Activated naive CD8-positive, alpha-beta T cell treated with anti-CD3 and anti-CD28 coated beads, Interleukin-2, amount 10 ng/mL, durations not matched to agents 7 days and 5 days (primary cell): ENCODE measurements at regions of chr22 and their contacts with region 1.

Region 1: DNA sequence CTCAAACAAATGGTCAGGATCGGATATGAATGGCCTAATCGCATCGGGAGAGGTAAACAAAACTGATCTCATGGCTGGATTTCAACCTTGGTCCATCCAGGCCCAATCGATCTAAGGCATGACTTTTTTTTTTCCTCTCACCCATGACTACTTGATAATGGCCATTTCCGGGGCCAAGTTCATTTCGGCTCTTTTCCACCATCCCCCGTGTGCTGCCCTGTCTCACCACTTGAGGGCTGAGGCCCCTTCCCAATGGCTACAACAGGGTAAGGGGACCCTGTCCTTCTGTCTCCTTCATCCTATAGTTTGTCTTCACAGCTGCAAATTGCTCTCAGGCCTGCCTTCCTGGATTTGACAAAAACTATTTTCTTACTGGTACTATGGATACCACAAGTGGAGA is 26.7 kb downstream of the GRAP2 start:
- DNase-seq: no peak
- ATAC-seq: peak; percentile 24
- H3K4me3 Mint-ChIP-seq: no peak overlapping the region
- H3K27ac Mint-ChIP-seq: no peak overlapping the region
- H3K4me1 Mint-ChIP-seq: peaks cover 34% of the 10 kb centered on the region
- H3K27me3 Mint-ChIP-seq: no peaks in the 10 kb centered on the region

Region 2: DNA sequence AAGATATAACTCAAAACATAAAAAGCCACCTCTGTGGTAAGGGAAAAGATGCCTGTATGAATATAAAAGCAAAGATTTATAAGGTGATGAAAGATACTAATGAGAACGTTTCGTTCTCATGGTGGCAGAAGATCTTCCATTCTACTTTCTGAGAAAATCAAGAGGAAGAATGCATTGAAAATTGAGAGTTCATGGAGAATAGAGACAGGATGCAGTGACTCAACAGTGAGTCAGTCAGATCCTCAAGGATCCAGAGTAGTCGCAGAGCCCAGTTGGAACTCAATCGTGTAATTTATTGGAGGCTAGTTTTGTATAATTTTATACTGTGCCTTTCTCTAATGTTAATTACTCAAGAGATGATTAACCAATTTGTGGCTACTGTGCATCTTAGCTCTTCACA is 107.3 kb before region 1 on chr22:
- POLR2A ChIA-PET with region 1: no interaction called
- DNase-seq: no peak
- ATAC-seq: no peak
- H3K4me3 Mint-ChIP-seq: no peak overlapping the region
- H3K27ac Mint-ChIP-seq: no peak overlapping the region
- H3K4me1 Mint-ChIP-seq: peaks cover 3% of the 10 kb centered on the region
- H3K27me3 Mint-ChIP-seq: peaks cover 40% of the 10 kb centered on the region

Region 3: DNA sequence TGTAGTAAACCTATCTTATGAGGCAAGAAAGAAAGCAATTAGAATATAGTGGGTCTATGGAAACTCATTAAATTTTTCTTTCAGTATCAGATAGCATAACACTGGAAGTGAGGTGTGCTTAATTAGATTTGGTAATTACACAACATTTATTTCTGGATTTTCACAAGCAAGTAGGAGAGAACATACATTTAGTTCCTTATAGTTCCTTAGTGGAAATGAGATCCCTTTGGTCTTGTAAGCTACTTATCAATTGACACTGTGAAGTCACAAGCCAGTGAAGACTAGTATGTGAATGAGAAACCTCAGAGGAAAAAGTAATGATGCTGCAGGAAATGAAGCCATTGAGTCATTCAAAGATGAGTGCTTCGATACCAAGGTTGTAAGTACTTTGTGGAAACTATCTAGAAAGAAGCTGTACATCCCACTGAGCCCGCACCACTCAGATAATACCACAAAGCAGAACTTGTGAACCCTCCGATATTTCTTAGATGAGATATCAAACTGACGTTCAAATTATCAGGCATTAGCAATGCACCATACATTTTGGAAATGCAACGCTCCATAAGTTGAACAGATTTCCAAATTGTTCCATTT is 87.5 kb before region 1 on chr22:
- POLR2A ChIA-PET with region 1: no interaction called
- DNase-seq: no peak
- ATAC-seq: peak; percentile 79
- H3K4me3 Mint-ChIP-seq: no peak overlapping the region
- H3K27ac Mint-ChIP-seq: peak overlapping the region; percentile 2
- H3K4me1 Mint-ChIP-seq: peaks cover 5% of the 10 kb centered on the region
- H3K27me3 Mint-ChIP-seq: peaks cover 7% of the 10 kb centered on the region

Region 4: DNA sequence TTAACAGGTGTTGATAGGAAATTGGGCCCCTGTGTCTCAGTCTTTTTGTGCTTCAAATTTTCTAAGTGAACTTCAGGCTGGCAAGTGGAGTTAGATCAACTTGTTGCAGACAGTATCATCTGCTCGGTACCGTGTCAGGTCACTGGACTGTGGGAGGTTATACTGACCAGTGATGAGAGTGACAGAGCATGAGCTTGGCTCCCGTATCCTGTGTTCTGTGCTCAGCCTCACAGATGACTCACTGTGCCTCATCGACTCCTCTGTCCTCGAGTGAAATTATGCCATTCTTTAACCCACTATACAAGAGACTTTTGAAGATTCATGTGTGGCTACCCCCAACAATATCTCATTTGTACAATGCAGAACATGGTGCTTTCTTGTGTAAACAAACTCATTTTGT is 18.8 kb before region 1 on chr22:
- POLR2A ChIA-PET with region 1: interaction called, 543 read pairs
- DNase-seq: no peak
- ATAC-seq: peak; percentile 45
- H3K4me3 Mint-ChIP-seq: peak overlapping the region; percentile 99
- H3K27ac Mint-ChIP-seq: peak overlapping the region; percentile 96
- H3K4me1 Mint-ChIP-seq: peaks cover 65% of the 10 kb centered on the region
- H3K27me3 Mint-ChIP-seq: no peaks in the 10 kb centered on the region